Activated CD4-positive, alpha-beta T cell treated with anti-CD3 and anti-CD28 coated beads for 36 hours (primary cell): ENCODE measurements at regions of chr10 and their contacts with region 1.

Region 1: DNA sequence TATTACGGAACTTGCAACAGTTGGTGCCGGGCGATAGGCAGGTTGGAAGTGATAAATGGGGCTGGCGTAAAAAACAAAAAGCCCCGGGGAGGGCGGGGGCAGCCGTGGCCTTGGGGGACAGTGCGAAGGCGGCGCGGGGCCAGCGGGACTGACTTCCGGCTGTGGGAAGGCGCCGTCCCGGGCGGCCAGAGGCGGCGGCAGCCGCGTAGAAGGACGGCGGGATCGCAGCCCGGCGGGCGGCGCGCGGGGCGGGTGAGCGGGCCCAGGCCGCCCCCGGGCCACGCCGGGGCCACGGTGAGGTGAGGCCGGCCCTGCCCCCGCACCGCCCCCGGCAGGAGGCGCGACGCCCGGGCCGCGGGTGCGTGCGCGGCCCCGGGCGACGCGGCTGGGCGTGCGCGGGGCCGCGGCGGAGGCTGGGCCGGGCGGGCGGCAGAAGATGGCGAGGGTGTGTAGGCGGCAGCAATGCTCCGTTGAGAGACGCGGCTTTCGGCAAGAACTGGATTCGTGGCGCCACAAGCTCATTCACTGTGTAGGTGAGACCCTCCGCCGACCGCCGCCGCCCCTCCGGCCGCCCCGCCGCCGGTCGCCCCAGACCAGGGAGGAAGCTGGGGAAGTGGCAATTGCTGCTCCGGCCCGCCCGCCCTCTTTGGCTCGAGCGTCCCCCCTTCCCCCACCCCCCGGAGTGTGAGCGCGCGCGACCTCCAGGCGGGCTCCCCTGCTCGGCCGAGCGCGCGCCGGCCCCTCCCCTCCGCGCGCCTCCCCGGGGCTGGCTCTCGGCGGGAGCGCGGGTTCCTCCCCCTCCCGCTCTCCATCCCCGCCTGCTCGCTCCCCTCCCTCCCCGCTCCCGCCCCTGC is at the start of gene LCOR:
- DNase-seq: peak; percentile 91
- ATAC-seq: peak; percentile 71
- H3K4me3 Mint-ChIP-seq: peak within 1 kb of the TSS; percentile 96
- H3K27ac Mint-ChIP-seq: peak within 1 kb of the TSS; percentile 96
- H3K4me1 Mint-ChIP-seq: peaks cover 49% of the 10 kb centered on the region
- H3K27me3 Mint-ChIP-seq: no peaks in the 10 kb centered on the region
- total RNA-seq, gene LCOR: 22.0 to 23.4 TPM

Region 2: GRCh38 chr10:96129387-96130325 is 702.4 kb before region 1 on chr10 and contains the start of gene ZNF518A:
- CTCF ChIA-PET with region 1: no interaction called
- POLR2A ChIA-PET with region 1: no interaction called
- intact Hi-C with region 1: loop called in 1 of 2 experiments (anchors 5 kb)
- DNase-seq: peak; percentile 93
- ATAC-seq: peak; percentile 88
- H3K4me3 Mint-ChIP-seq: peak within 1 kb of the TSS; percentile 83
- H3K27ac Mint-ChIP-seq: peak within 1 kb of the TSS; percentile 99
- H3K4me1 Mint-ChIP-seq: peaks cover 20% of the 10 kb centered on the region
- H3K27me3 Mint-ChIP-seq: peaks cover 26% of the 10 kb centered on the region
- total RNA-seq, gene ZNF518A: 13.9 to 14.2 TPM

Region 3: GRCh38 chr10:96642973-96643372 is 189.1 kb before region 1 on chr10:
- CTCF ChIA-PET with region 1: interaction called, 6 read pairs
- POLR2A ChIA-PET with region 1: interaction called, 3 read pairs
- intact Hi-C with region 1: loop called (anchors 1 kb)
- DNase-seq: peak; percentile 88
- ATAC-seq: peak; percentile 80
- H3K4me3 Mint-ChIP-seq: no peak overlapping the region
- H3K27ac Mint-ChIP-seq: no peak overlapping the region
- H3K4me1 Mint-ChIP-seq: peaks cover 22% of the 10 kb centered on the region
- H3K27me3 Mint-ChIP-seq: no peaks in the 10 kb centered on the region

Region 4: DNA sequence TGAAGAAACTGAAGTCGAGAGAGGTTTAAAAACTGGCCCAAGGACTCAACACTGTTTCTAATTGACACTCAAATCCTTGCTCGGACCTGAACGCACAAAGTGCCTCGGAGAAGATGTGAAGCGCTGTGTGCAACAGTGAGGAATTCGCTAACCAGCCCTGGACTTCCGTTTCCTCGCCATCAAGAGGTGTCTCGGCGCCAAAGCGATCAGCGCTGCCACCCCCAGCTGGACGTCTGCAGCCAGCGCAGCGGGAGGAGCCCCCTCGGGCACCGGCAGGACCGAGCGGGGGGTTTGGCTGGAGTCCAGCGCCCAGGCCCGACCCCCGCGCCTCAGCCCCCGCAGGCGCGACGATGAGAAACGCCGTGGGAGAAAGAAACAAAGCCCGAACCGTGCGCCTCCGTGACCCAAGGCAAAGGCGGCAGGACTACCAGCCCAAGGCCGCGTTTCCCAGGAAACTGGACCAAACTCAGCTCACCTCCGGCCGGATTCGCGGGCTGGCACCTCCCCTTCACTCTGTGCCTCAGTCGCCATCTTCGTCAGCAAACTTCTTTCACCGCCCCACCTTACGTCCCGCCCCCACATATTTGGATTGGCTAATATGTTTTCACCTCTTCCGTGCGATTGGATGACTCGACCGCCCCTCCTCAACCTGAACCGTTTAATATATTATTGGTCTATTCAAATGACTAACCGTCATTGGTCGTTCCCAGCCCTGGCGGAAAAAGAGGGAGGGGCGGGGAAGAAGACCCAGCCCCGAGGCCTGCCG is 460.2 kb after region 1 on chr10 and contains the start of gene ARHGAP19:
- CTCF ChIA-PET with region 1: no interaction called
- POLR2A ChIA-PET with region 1: no interaction called
- intact Hi-C with region 1: loop called in 1 of 2 experiments (anchors 1 kb)
- DNase-seq: peak; percentile 97
- ATAC-seq: peak; percentile 99
- H3K4me3 Mint-ChIP-seq: peak within 1 kb of the TSS; percentile 93
- H3K27ac Mint-ChIP-seq: peak within 1 kb of the TSS; percentile 87
- H3K4me1 Mint-ChIP-seq: peaks cover 20% of the 10 kb centered on the region
- H3K27me3 Mint-ChIP-seq: peaks cover 2% of the 10 kb centered on the region
- total RNA-seq, gene ARHGAP19: 55.9 to 70.2 TPM

Region 5: GRCh38 chr10:97445722-97446639 is 613.9 kb after region 1 on chr10 and contains the starts of genes EXOSC1 and ZDHHC16:
- CTCF ChIA-PET with region 1: no interaction called
- POLR2A ChIA-PET with region 1: no interaction called
- intact Hi-C with region 1: loop called in 1 of 2 experiments (anchors 1 kb)
- DNase-seq: peak; percentile 96
- ATAC-seq: peak; percentile 91
- H3K4me3 Mint-ChIP-seq: peak within 1 kb of the TSS; percentile 86
- H3K27ac Mint-ChIP-seq: peak within 1 kb of the TSS; percentile 90
- H3K4me1 Mint-ChIP-seq: peaks cover 55% of the 10 kb centered on the region
- H3K27me3 Mint-ChIP-seq: no peaks in the 10 kb centered on the region
- total RNA-seq, gene EXOSC1: 52.3 to 54.2 TPM
- total RNA-seq, gene ZDHHC16: 34.6 to 42.8 TPM

Region 6: GRCh38 chr10:97676770-97677581 is 844.9 kb after region 1 on chr10:
- CTCF ChIA-PET with region 1: no interaction called
- POLR2A ChIA-PET with region 1: no interaction called
- intact Hi-C with region 1: no loop called
- DNase-seq: peak; percentile 64
- ATAC-seq: peak; percentile 84
- H3K4me3 Mint-ChIP-seq: no peak overlapping the region
- H3K27ac Mint-ChIP-seq: no peak overlapping the region
- H3K4me1 Mint-ChIP-seq: peaks cover 5% of the 10 kb centered on the region
- H3K27me3 Mint-ChIP-seq: no peaks in the 10 kb centered on the region

Region 7: GRCh38 chr10:98134431-98135221 is 1302.5 kb after region 1 on chr10 and contains the start of gene R3HCC1L:
- CTCF ChIA-PET with region 1: no interaction called
- POLR2A ChIA-PET with region 1: no interaction called
- intact Hi-C with region 1: loop called in 1 of 2 experiments (anchors 5 kb)
- DNase-seq: peak; percentile 97
- ATAC-seq: peak; percentile 95
- H3K4me3 Mint-ChIP-seq: peak within 1 kb of the TSS; percentile 86
- H3K27ac Mint-ChIP-seq: peak within 1 kb of the TSS; percentile 93
- H3K4me1 Mint-ChIP-seq: peaks cover 44% of the 10 kb centered on the region
- H3K27me3 Mint-ChIP-seq: no peaks in the 10 kb centered on the region
- total RNA-seq, gene R3HCC1L: 13.5 to 16.8 TPM